Activated CD4-positive, alpha-beta T cell treated with anti-CD3 and anti-CD28 coated beads for 36 hours (primary cell): ENCODE measurements at regions of chr15 and their contacts with region 1.

Region 1: DNA sequence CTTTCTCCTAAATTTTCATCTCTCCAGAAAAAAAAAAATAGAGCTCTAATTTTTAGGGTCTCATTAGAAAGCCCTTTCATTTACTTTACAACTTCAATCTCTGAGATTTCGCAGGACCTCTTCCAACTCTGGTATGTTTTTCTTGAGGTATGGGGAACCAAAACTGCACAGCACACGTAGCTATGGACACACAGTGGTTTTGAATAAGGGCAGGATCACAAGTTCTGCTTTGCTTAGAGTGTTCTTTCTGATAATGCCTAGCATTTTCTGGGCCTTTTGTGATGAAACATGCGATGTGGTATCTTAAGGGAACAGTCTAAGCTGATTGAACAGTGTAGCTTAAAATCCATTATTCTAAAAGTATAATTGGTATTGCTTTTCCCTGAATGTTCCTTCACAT is 25.3 kb downstream of the ZNF592 start:
- DNase-seq: no peak
- ATAC-seq: no peak
- H3K4me3 Mint-ChIP-seq: no peak overlapping the region
- H3K27ac Mint-ChIP-seq: no peak overlapping the region
- H3K4me1 Mint-ChIP-seq: peaks cover 32% of the 10 kb centered on the region
- H3K27me3 Mint-ChIP-seq: no peaks in the 10 kb centered on the region

Region 2: GRCh38 chr15:84755736-84756527 is 17.8 kb before region 1 on chr15:
- CTCF ChIA-PET with region 1: interaction called, 3 read pairs
- POLR2A ChIA-PET with region 1: interaction called, 4 read pairs
- intact Hi-C with region 1: loop called in 1 of 2 experiments (anchors 2 kb)
- DNase-seq: no peak
- ATAC-seq: peak; percentile 64
- H3K4me3 Mint-ChIP-seq: no peak overlapping the region
- H3K27ac Mint-ChIP-seq: peak overlapping the region; percentile 44
- H3K4me1 Mint-ChIP-seq: peaks cover 46% of the 10 kb centered on the region
- H3K27me3 Mint-ChIP-seq: no peaks in the 10 kb centered on the region

Region 3: DNA sequence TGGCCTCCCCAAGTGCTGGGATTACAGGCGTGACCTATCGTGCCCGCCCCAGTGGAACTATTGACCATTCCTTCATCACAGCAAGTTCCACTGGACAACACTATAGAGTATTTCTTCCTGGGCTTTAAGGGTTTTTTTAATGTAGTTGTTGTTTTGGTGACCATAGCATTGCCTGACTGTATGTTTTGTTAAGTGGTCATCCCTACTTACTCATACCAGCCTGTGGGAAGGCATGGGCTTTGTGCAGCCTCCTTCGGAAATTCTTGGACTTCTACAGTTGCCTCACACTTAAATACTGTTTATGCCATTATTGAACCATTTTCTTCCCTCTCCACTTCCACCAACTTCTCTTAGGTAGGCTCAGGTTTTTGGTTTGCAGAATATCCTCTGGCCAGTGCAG is 23.5 kb after region 1 on chr15:
- CTCF ChIA-PET with region 1: no interaction called
- POLR2A ChIA-PET with region 1: no interaction called
- intact Hi-C with region 1: no loop called
- DNase-seq: no peak
- ATAC-seq: no peak
- H3K4me3 Mint-ChIP-seq: no peak overlapping the region
- H3K27ac Mint-ChIP-seq: no peak overlapping the region
- H3K4me1 Mint-ChIP-seq: no peaks in the 10 kb centered on the region
- H3K27me3 Mint-ChIP-seq: no peaks in the 10 kb centered on the region

Region 4: DNA sequence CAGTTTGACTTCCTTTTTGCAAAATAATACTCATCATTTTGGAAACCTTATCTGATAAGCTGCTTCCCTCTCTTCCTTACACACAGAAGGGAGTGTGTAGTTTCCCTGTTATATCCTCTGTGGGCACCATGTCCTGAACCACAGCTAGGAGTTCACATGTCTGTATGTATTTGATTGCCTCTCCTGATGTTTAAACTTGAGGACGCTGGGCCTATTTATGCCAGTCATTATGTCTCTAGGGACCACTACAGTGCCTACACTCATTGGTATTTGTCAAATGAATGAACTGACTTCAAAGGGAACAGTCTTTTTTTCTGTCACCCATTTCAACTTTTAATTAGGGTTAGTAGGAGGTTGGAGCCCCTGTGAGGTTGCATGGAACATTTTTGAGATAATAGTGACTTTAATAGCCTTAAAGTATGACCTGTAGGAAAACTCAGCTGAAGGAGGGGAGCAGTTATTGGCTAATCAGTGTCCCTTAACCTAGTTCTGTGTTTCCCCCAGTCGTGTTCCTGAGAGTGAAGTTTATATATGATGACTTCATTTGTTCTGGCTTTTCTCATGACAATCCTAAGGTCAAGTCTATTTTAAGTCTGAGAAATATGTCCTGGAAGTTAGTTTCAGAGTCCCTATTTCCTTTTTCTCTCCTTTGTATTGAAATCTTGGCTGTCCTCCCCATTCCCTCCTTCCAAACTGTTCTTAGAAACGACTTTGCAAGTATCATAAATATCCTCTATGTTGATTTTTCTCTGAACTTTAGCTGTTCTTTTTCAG is 236.9 kb after region 1 on chr15:
- CTCF ChIA-PET with region 1: no interaction called
- POLR2A ChIA-PET with region 1: no interaction called
- intact Hi-C with region 1: no loop called
- DNase-seq: no peak
- ATAC-seq: no peak
- H3K4me3 Mint-ChIP-seq: no peak overlapping the region
- H3K27ac Mint-ChIP-seq: no peak overlapping the region
- H3K4me1 Mint-ChIP-seq: peaks cover 28% of the 10 kb centered on the region
- H3K27me3 Mint-ChIP-seq: no peaks in the 10 kb centered on the region